H1 (cell line): ENCODE measurements at regions of chr17 and their contacts with region 1.

Region 1: DNA sequence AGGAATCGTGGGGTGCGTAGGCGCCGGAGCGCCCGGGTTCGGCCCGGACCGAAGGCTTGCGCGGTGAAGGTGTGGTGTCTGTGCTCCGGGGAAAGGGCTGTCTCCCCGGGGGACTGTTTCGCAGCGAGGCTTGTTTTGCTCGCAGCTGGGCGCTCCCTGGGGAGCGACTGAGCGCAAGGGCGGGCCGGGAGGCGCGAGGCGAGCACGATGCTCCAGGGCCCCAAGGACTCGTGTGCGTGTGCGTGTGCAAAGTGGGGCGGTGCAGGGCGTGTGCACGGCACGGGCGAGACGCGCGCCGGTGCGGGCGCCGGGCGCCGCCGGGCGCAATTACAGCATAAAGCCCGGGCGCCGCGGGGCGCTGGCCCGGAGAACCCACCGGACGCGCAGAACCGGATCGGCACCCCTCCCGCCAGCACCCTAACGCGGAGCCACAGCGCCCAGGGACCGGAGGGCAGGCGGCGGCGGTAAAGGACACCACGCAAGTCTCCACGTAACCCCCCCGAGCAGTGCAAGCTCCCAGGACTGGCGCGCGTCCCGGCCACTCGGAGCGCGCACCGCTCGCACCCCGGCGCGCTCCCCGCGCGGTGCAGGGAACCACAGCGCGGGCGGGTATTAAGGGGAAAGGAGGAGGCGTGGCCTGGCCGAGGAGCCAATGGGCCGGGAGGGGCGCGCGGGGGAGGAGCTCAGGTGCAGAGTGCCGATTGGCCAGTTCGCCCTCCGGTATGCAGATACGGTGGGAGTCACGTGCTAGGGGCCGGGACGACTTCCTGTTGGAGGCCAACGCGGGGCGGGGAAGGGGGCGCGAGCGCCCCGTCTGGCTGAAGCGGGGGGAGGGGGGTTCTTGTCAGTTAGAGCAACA is at the start of gene TNRC6C:
- DNase-seq: peak; percentile 95 to 99
- H3K4me3 ChIP-seq: peak within 1 kb of the TSS; percentile 66 to 93 (median 82)
- H3K27ac ChIP-seq: 0 out of 2 replicates have a peak within 1 kb of the TSS, but pooled peaks have one; percentile 2
- H3K4me1 ChIP-seq: peaks cover 1 to 5% (median 4%) of the 10 kb centered on the region in 4 experiments; a peak in 4 of 7 replicates
- H3K27me3 ChIP-seq: peaks cover 6 to 30% (median 20%) of the 10 kb centered on the region in 4 experiments
- CTCF ChIP-seq: peak in 2 of 3 experiments; percentile 5 to 8; a peak in 2 of 4 replicates
- EP300 ChIP-seq: no peak
- POLR2A ChIP-seq: peak; percentile 99 to 100
- RAD21 ChIP-seq: peak in 1 of 2 experiments; percentile 2; a peak in 2 of 4 replicates
- total RNA-seq, gene TNRC6C: 28.9 and 30.5 TPM in 2 replicates

Region 2: DNA sequence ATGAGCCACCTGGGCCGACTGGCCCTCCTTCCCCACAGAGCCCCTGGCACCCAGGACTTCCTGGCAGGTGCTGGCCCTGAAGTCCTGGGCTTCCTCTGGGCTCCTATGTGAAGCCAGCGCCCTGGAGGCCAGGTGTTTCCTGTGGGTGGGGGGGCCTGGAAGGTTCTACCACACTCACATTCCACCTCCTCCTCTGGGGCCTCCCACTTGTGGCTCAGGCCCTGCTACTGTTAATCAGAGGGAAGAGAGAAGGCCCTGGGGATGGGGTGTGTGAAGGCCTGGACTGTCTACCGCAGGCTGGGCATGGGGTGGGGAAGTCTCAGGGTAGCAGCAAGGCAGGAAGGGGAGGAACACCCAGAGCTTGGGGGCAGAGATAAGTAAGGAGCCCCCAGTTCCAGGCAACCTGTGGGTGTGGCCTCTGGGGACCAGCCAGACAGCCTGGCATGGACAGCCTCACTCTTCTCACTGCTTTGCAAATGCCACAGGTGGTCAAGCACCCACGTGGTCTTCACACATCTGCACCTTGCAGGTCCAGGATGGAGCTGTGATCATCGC is 111.5 kb before region 1 on chr17:
- CTCF ChIA-PET with region 1: no interaction called
- POLR2A ChIA-PET with region 1: interaction called, 11 read pairs
- DNase-seq: no peak
- H3K4me3 ChIP-seq: no peak overlapping the region
- H3K27ac ChIP-seq: no peak overlapping the region
- H3K4me1 ChIP-seq: peaks cover 0 to 7% (median 0%) of the 10 kb centered on the region in 4 experiments; a peak in 2 of 7 replicates
- H3K27me3 ChIP-seq: peaks cover 0 to 1% (median 0%) of the 10 kb centered on the region in 4 experiments; a peak in 1 of 7 replicates
- CTCF ChIP-seq: no peak
- EP300 ChIP-seq: no peak
- POLR2A ChIP-seq: no peak
- RAD21 ChIP-seq: no peak

Region 3: GRCh38 chr17:77899498-77899897 is 58.6 kb before region 1 on chr17:
- CTCF ChIA-PET with region 1: interaction called, 5 read pairs
- POLR2A ChIA-PET with region 1: interaction called, 13 read pairs
- DNase-seq: no peak
- H3K4me3 ChIP-seq: no peak overlapping the region
- H3K27ac ChIP-seq: no peak overlapping the region
- H3K4me1 ChIP-seq: no peaks in the 10 kb centered on the region
- H3K27me3 ChIP-seq: no peaks in the 10 kb centered on the region
- CTCF ChIP-seq: no peak
- EP300 ChIP-seq: no peak
- POLR2A ChIP-seq: no peak
- RAD21 ChIP-seq: no peak

Region 4: DNA sequence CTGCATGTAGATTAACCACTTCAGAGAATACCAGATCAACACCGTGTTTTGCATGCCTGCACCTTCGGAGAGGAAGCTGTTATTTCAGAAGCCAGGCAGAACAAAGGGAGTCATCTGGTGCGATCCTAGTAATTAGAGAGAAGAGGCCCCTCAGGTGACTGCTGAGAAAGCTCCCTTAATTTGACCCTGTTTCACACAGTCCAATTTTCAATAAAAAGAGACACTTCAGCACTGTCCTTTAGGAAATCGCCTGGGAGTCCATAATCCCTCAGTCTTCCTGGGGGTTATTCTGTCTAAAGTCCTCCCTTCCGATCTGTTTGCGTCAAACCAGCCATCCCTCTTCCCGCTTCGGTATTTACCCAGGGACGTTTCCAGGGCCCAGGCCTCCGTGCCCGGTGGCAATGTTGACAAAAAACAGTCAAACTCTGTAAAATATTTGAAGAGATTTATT is 22.9 kb before region 1 on chr17:
- CTCF ChIA-PET with region 1: no interaction called
- POLR2A ChIA-PET with region 1: interaction called, 100 read pairs
- DNase-seq: no peak
- H3K4me3 ChIP-seq: peak overlapping the region in 1 of 4 experiments; percentile 7; a peak in 1 of 8 replicates
- H3K27ac ChIP-seq: no peak overlapping the region
- H3K4me1 ChIP-seq: peaks cover 4 to 20% (median 11%) of the 10 kb centered on the region in 4 experiments; a peak in 6 of 7 replicates
- H3K27me3 ChIP-seq: no peaks in the 10 kb centered on the region; a peak in 1 of 7 replicates
- CTCF ChIP-seq: no peak
- EP300 ChIP-seq: no peak
- POLR2A ChIP-seq: no peak
- RAD21 ChIP-seq: no peak

Region 5: GRCh38 chr17:77968788-77969187 is 10.7 kb after region 1 on chr17:
- CTCF ChIA-PET with region 1: interaction called, 5 read pairs
- POLR2A ChIA-PET with region 1: interaction called, 17 read pairs
- DNase-seq: no peak
- H3K4me3 ChIP-seq: no peak overlapping the region
- H3K27ac ChIP-seq: no peak overlapping the region
- H3K4me1 ChIP-seq: peaks cover 0 to 2% (median 0%) of the 10 kb centered on the region in 4 experiments; a peak in 1 of 7 replicates
- H3K27me3 ChIP-seq: no peaks in the 10 kb centered on the region
- CTCF ChIP-seq: no peak
- EP300 ChIP-seq: no peak
- POLR2A ChIP-seq: no peak
- RAD21 ChIP-seq: no peak

Region 6: GRCh38 chr17:78053777-78054468 is 95.8 kb after region 1 on chr17:
- CTCF ChIA-PET with region 1: no interaction called
- POLR2A ChIA-PET with region 1: no interaction called
- DNase-seq: no peak
- H3K4me3 ChIP-seq: no peak overlapping the region
- H3K27ac ChIP-seq: no peak overlapping the region
- H3K4me1 ChIP-seq: no peaks in the 10 kb centered on the region
- H3K27me3 ChIP-seq: no peaks in the 10 kb centered on the region
- CTCF ChIP-seq: no peak
- EP300 ChIP-seq: no peak
- POLR2A ChIP-seq: no peak
- RAD21 ChIP-seq: no peak

Region 7: GRCh38 chr17:78092794-78093324 is 134.8 kb after region 1 on chr17:
- CTCF ChIA-PET with region 1: no interaction called
- POLR2A ChIA-PET with region 1: no interaction called
- DNase-seq: no peak
- H3K4me3 ChIP-seq: no peak overlapping the region
- H3K27ac ChIP-seq: no peak overlapping the region
- H3K4me1 ChIP-seq: no peaks in the 10 kb centered on the region
- H3K27me3 ChIP-seq: no peaks in the 10 kb centered on the region
- CTCF ChIP-seq: no peak
- EP300 ChIP-seq: no peak
- POLR2A ChIP-seq: no peak
- RAD21 ChIP-seq: no peak